ENCODE measurements at regions of chrX and their contacts with region 1.

Region 1: GRCh38 chrX:119013164-119013563 is 38.7 kb downstream of the LONRF3 start:
- DNase-seq: no peak
- H3K4me3 ChIP-seq: no peak overlapping the region
- H3K27ac ChIP-seq: no peak overlapping the region
- H3K4me1 ChIP-seq: no peaks in the 10 kb centered on the region
- H3K27me3 ChIP-seq: no peaks in the 10 kb centered on the region
- CTCF ChIP-seq: no peak

Region 2: DNA sequence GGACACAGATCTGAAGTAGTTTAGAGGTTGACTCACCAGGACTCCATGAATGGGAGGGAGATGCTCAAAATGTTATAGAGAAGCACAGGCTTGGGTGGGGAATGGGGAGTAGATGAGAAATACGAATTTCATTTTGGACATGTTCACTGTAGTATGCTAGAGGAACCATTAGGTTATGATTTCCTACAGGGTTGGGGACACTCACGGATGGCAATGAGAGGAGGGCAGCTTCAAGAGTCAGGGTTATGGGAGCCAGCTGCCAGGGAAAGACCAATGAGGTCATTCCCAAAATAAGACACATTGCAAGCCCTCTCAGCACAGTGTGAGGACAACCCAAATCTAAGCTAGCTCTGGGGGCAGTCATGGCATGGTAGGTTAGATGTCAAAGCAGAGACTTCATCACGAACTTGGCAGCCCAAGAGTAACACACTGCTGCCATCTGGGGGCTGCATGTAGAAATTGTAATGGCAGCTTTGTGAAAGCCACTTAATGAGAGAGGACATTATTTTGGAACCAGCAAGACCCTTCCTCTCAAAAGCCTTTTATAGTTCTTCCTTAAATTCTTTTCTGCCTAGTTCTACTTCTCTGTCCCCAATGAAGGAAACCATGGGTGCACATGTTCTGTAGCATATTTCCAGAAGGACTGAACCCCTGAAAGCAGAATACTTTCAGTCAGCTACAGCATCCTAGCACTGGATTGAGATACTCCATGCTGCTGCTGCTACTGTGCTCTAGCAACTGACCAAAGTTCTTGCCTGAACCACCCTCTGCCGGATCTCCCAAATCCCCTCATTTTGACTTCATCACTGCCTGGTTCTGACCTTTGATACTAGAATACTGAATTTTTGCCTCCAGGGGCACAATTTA is 205.8 kb before region 1 on chrX:
- intact Hi-C with region 1: no loop called
- DNase-seq: peak; percentile 30
- H3K4me3 ChIP-seq: no peak overlapping the region
- H3K27ac ChIP-seq: no peak overlapping the region
- H3K4me1 ChIP-seq: no peaks in the 10 kb centered on the region
- H3K27me3 ChIP-seq: no peaks in the 10 kb centered on the region
- CTCF ChIP-seq: peak; percentile 59

Region 3: DNA sequence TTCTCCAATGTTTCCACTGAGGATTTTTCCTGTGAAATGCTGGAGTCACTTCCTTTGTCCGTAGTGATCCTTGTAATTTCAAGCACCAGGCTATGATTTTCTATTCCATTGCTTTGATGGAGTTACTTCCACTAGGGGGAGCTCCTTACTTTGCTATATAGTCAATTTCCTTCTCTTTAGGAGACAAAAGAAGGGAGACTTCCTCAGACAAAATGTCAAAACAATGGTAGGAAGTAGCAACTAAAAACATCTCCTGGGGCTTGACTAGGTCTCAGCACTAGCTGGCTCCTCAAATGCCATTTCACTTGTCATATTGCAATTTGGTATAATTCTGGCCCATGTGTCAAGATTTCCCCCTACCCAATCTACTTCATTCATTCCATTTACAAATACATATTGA is 165.5 kb before region 1 on chrX:
- intact Hi-C with region 1: loop called (anchors 5 kb)
- DNase-seq: no peak
- H3K4me3 ChIP-seq: no peak overlapping the region
- H3K27ac ChIP-seq: no peak overlapping the region
- H3K4me1 ChIP-seq: no peaks in the 10 kb centered on the region
- H3K27me3 ChIP-seq: no peaks in the 10 kb centered on the region
- CTCF ChIP-seq: peak; percentile 48

Region 4: DNA sequence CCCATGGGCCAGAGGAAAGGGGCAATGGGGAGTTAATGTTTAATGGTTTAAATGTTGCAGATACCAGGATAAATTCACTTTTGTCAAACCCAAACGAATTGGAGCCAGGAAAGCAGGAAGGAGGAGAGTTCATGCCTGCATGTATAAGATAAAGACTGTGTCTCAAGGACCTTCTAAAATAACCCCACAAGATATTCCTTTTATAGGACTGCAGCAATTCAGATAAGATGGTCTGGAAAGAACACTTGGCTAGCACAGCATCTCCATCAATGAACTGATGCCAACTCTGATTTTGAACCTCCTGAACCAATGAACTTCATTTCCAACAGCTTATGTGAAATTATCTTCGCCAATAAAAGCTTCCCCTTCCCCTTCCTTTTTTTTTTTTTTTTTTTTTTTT is 70.1 kb before region 1 on chrX:
- intact Hi-C with region 1: no loop called
- DNase-seq: no peak
- H3K4me3 ChIP-seq: no peak overlapping the region
- H3K27ac ChIP-seq: no peak overlapping the region
- H3K4me1 ChIP-seq: no peaks in the 10 kb centered on the region
- H3K27me3 ChIP-seq: no peaks in the 10 kb centered on the region
- CTCF ChIP-seq: no peak